AG04449 (cell line): ENCODE measurements at regions of chr12 and their contacts with region 1.

Region 1: GRCh38 chr12:127108360-127109215 is 1158.4 kb upstream of the TMEM132C start:
- DNase-seq: no peak
- H3K4me3 ChIP-seq: no peak overlapping the region
- CTCF ChIP-seq: peak; percentile 63

Region 2: DNA sequence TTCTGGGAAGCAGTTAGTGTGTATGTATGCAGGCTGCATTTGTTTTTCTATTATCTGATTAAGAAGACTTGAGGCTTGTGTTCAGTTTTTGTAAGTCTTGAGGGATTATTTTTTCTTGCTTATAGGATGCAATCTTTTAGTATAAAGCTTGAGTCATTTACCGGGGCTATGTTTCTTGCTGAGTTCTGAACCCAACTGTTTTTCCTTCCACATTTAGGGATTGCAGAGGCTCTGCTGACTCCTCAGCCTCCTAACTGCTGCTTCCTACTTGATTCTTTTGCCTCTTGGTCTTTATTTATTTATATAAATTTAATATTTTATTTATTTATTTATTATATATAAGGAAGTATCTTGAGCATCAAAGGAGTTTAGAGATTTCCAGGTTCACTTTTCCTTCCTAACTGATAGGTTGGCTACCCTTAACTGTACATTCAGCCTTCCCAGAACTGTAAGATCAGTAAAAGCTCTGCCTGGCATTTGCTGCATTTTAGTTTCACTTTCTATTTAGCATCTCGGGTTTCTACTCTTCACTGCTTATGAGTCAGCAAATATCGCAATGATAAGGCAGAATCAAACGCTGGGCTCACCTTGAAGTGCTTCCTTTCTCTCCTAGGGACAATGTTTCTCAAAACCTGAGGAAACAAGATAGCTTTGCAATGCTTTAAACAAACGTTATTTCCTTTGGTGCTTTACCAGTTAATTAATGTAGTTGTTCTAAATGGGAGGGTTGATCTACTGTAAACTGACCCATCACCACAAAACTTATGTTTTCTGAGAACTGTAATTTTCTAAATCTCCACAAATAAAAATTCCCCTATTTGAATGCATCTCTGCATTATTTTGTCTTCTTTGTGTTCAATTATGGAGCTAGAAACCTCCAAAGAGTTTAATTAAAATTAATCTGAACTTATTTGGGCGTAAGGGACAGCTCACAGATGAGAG is 25.3 kb before region 1 on chr12:
- CTCF ChIA-PET with region 1: interaction called, 30 read pairs
- POLR2A ChIA-PET with region 1: no interaction called
- DNase-seq: peak; percentile 26
- H3K4me3 ChIP-seq: peak overlapping the region; percentile 50
- CTCF ChIP-seq: no peak

Region 3: GRCh38 chr12:127280393-127281275 is 172.0 kb after region 1 on chr12:
- CTCF ChIA-PET with region 1: interaction called, 48 read pairs
- POLR2A ChIA-PET with region 1: no interaction called
- DNase-seq: no peak
- H3K4me3 ChIP-seq: no peak overlapping the region
- CTCF ChIP-seq: peak; percentile 82

Region 4: DNA sequence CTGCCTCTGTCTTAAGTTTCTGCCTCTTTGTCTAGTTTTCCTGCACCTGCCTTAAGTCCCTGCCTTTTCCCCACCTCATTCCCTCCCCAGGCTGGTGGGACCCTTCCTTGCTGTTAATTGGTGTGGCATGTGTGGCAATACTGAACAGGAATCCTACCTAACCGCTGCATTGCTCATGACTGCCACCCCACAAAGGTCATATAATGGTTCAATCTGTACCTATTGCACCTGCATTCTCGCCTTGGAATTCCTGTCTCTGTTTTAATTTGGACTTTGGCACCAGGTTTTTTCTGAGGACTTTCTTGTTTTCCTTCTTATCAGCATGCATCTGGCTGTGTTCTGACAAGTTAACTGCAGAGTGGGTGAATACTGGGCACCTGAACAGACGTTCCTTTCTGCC is 192.2 kb after region 1 on chr12:
- CTCF ChIA-PET with region 1: interaction called, 221 read pairs
- POLR2A ChIA-PET with region 1: no interaction called
- DNase-seq: no peak
- H3K4me3 ChIP-seq: no peak overlapping the region
- CTCF ChIP-seq: no peak

Region 5: GRCh38 chr12:127363392-127363791 is 254.8 kb after region 1 on chr12:
- CTCF ChIA-PET with region 1: interaction called, 23 read pairs
- POLR2A ChIA-PET with region 1: no interaction called
- DNase-seq: no peak
- H3K4me3 ChIP-seq: no peak overlapping the region
- CTCF ChIP-seq: peak; percentile 22

Region 6: GRCh38 chr12:129049917-129050316 is 1941.3 kb after region 1 on chr12:
- CTCF ChIA-PET with region 1: no interaction called
- POLR2A ChIA-PET with region 1: no interaction called
- DNase-seq: no peak
- H3K4me3 ChIP-seq: no peak overlapping the region
- CTCF ChIP-seq: no peak